ENCODE measurements at regions of chr10 and their contacts with region 1.

Region 1: DNA sequence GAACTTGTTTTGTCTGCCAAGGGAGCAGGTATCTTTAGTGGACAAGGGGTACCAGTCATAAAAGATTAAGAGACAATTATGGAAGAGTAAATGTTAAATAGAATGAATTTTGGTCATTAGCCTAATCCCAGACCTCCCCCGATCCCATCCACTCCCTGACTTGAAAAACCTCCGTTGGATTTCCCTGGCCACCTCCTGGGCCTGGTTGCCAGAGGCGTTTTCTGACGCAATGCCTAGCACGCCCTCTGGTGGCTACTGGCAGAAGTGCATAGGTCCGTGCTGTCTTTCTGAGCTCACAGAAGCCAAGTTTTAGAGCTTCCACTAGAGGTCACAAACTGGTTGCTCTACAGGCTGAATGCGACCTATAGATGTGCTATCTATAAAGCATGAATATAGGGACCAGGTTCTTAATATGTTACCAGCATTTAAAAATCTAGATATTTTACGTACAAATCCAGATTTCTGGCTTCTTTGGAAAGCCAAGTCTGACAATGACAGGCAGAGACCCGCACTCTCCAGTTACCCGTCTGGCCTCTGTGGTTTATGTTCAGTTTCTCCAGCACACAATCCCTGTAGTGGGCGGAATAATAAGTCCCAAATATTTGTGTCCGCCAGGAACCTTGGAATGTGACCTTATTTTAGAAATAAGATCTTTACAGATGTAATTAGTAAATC is 39.8 kb downstream of the SPOCK2 start:
- DNase-seq: peak; percentile 98
- ATAC-seq: peak; percentile 87
- H3K4me3 Mint-ChIP-seq: no peak overlapping the region
- H3K27ac Mint-ChIP-seq: no peak overlapping the region
- H3K4me1 Mint-ChIP-seq: peaks cover 7% of the 10 kb centered on the region
- H3K27me3 Mint-ChIP-seq: peaks cover 3% of the 10 kb centered on the region; the same call in 1 of the 2 replicates
- CTCF ChIP-seq: peak; percentile 99

Region 2: DNA sequence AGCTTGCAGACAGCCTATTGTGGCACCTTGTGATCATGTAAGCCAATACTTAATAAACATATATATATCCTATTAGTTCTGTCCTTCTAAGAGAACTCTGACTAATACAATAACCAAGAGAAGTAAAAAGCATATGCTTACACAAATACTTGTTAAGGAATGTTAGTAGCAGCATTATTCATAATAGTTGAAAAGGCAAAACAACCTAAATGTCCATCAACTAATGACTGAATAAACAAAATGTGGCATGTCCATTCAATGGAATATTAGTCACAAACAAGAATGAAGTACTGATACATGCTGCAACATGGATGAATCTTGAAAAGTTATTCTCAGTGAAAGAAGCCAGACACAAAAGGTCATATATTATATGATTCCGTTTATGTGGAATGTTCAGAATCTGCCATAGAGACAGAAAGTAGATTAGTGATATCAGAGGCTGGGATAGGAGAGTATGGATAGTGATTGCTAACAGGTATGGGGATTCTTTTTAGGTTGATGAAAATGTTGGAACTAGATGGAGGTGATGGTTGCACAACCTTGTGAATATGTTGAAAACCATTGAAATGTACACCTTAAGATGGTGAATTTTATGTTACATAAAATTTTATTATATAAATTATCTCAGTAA is 948.7 kb before region 1 on chr10:
- CTCF ChIA-PET with region 1: no interaction called
- POLR2A ChIA-PET with region 1: no interaction called
- DNase-seq: no peak
- ATAC-seq: no peak
- H3K4me3 Mint-ChIP-seq: no peak overlapping the region
- H3K27ac Mint-ChIP-seq: no peak overlapping the region
- H3K4me1 Mint-ChIP-seq: no peaks in the 10 kb centered on the region
- H3K27me3 Mint-ChIP-seq: peaks cover 13% of the 10 kb centered on the region; the same call in 1 of the 2 replicates
- CTCF ChIP-seq: no peak

Region 3: DNA sequence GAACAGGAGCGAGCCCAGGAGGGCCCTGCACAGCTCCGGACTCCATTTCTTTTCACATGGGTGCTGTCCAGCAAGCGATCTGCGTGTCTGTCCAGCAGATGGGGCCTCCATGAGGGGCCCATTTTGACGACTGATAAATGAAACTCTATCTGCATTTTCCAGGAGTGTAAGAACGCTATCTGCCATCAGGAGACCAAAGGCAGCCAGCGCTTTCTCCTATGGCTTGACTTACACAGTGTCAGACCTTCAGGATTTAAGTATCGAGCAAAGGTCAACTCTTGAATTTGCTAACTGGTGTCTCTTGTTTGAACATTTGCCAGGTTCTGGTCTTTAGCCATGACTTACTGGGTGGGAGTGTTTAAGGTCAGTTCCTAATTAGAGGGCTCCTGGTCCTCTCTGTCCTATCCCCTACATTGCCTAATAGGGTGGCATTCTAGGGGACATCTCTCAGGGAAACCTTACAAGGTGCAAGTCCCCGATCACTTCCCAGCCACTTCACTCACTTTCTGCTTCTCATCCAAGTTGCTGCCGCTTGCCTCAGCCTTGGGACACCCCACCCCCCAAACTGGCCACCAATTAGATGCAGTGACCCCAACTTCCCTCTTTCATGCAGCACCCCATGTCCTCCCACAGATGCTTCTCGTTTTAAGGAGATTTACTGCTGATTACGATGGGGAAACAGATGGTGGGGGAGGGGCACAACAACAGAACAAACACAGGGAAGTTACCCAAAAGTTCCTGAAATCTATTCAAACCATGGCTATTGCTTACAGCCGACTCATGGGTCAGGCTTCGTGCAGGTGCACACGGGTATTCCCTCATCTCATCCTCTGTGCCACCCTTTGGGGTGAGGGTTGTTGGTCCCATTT is 295.3 kb before region 1 on chr10:
- CTCF ChIA-PET with region 1: no interaction called
- POLR2A ChIA-PET with region 1: no interaction called
- DNase-seq: no peak
- ATAC-seq: no peak
- H3K4me3 Mint-ChIP-seq: no peak overlapping the region
- H3K27ac Mint-ChIP-seq: no peak overlapping the region
- H3K4me1 Mint-ChIP-seq: peaks cover 27% of the 10 kb centered on the region
- H3K27me3 Mint-ChIP-seq: no peaks in the 10 kb centered on the region
- CTCF ChIP-seq: no peak

Region 4: GRCh38 chr10:71857934-71858890 is 190.4 kb before region 1 on chr10:
- CTCF ChIA-PET with region 1: no interaction called
- POLR2A ChIA-PET with region 1: no interaction called
- DNase-seq: no peak
- ATAC-seq: no peak
- H3K4me3 Mint-ChIP-seq: no peak overlapping the region
- H3K27ac Mint-ChIP-seq: no peak overlapping the region
- H3K4me1 Mint-ChIP-seq: peaks cover 11% of the 10 kb centered on the region
- H3K27me3 Mint-ChIP-seq: no peaks in the 10 kb centered on the region
- CTCF ChIP-seq: no peak

Region 5: DNA sequence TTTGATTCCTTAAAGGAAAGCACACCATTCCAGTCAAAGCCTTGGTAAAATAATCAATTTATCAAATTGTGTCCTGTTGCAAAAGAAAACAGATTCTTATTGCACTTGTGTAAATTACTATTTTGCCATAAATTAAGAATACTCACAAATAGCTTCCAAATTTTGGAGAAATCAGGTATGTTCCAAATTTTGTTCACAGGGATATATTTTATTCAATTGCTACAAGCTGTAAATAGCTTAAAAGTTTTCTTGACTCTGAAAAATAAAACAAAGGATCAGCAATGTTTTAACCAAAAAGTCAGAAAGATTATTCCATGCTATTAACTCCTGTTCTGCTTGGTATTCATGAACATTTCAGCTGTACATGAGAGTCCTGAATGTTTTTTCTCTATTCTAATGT is 131.8 kb before region 1 on chr10:
- CTCF ChIA-PET with region 1: interaction called, 13 read pairs
- POLR2A ChIA-PET with region 1: no interaction called
- DNase-seq: no peak
- ATAC-seq: no peak
- H3K4me3 Mint-ChIP-seq: no peak overlapping the region
- H3K27ac Mint-ChIP-seq: no peak overlapping the region
- H3K4me1 Mint-ChIP-seq: no peaks in the 10 kb centered on the region
- H3K27me3 Mint-ChIP-seq: no peaks in the 10 kb centered on the region
- CTCF ChIP-seq: no peak

Region 6: GRCh38 chr10:71974489-71975021 is 74.0 kb before region 1 on chr10:
- CTCF ChIA-PET with region 1: interaction called, 17 read pairs
- POLR2A ChIA-PET with region 1: no interaction called
- DNase-seq: no peak
- ATAC-seq: no peak
- H3K4me3 Mint-ChIP-seq: no peak overlapping the region
- H3K27ac Mint-ChIP-seq: no peak overlapping the region
- H3K4me1 Mint-ChIP-seq: peaks cover 20% of the 10 kb centered on the region
- H3K27me3 Mint-ChIP-seq: no peaks in the 10 kb centered on the region
- CTCF ChIP-seq: no peak

Region 7: DNA sequence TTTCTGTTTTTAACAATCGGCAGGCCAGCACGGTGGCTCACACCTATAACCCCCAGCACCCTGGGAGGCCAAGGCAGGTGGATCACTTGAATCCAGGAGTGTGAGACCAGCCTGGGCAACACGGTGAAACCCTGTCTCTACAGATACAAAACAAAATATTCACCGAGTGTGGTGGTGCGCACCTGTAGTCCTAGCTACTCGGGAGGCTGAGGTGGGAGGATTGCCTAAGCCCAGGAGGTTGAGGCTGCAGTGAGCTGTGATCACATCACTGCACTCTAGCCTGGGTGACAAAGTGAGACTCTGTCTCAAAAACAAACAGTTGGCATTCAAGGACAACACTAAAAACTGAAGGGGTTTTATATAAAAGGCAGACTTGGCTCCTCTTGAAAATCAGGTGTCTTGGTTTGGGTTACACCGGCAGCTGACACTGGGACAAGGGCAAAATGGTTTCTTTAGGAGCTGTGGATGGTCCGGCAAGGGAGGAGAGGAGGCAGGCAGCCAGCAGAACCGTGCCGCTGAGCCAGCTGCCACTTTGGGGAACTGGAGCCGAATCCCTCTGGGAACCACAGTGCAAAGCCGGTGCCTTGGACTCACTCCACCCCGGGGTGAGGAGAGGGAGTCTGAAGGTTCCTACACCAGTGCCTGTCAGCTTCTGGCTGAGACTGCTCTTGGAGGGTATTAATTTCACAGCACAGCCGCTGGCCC is 31.8 kb before region 1 on chr10:
- CTCF ChIA-PET with region 1: interaction called, 20 read pairs
- POLR2A ChIA-PET with region 1: no interaction called
- DNase-seq: no peak
- ATAC-seq: no peak
- H3K4me3 Mint-ChIP-seq: no peak overlapping the region
- H3K27ac Mint-ChIP-seq: no peak overlapping the region
- H3K4me1 Mint-ChIP-seq: peaks cover 6% of the 10 kb centered on the region
- H3K27me3 Mint-ChIP-seq: no peaks in the 10 kb centered on the region
- CTCF ChIP-seq: no peak

Region 8: GRCh38 chr10:72038458-72039001 is 10.1 kb before region 1 on chr10:
- CTCF ChIA-PET with region 1: interaction called, 25 read pairs
- POLR2A ChIA-PET with region 1: interaction called, 3 read pairs
- DNase-seq: no peak
- ATAC-seq: no peak
- H3K4me3 Mint-ChIP-seq: no peak overlapping the region
- H3K27ac Mint-ChIP-seq: no peak overlapping the region
- H3K4me1 Mint-ChIP-seq: peaks cover 17% of the 10 kb centered on the region
- H3K27me3 Mint-ChIP-seq: no peaks in the 10 kb centered on the region; the same call in 1 of the 2 replicates
- CTCF ChIP-seq: no peak

Region 9: GRCh38 chr10:72079356-72079755 is 30.8 kb after region 1 on chr10:
- CTCF ChIA-PET with region 1: interaction called, 17 read pairs
- POLR2A ChIA-PET with region 1: no interaction called
- DNase-seq: no peak
- ATAC-seq: no peak
- H3K4me3 Mint-ChIP-seq: no peak overlapping the region
- H3K27ac Mint-ChIP-seq: no peak overlapping the region
- H3K4me1 Mint-ChIP-seq: peaks cover 5% of the 10 kb centered on the region; the same call in 1 of the 2 replicates
- H3K27me3 Mint-ChIP-seq: no peaks in the 10 kb centered on the region
- CTCF ChIP-seq: no peak

Region 10: GRCh38 chr10:72331601-72332422 is 283.2 kb after region 1 on chr10:
- CTCF ChIA-PET with region 1: interaction called, 15 read pairs
- POLR2A ChIA-PET with region 1: no interaction called
- DNase-seq: peak; percentile 81
- ATAC-seq: peak; percentile 88
- H3K4me3 Mint-ChIP-seq: peak overlapping the region; percentile 54
- H3K27ac Mint-ChIP-seq: peak overlapping the region; percentile 92
- H3K4me1 Mint-ChIP-seq: peaks cover 48% of the 10 kb centered on the region
- H3K27me3 Mint-ChIP-seq: no peaks in the 10 kb centered on the region
- CTCF ChIP-seq: no peak